Activated CD4-positive, alpha-beta T cell treated with anti-CD3 and anti-CD28 coated beads for 36 hours (primary cell): ENCODE measurements at regions of chr14 and their contacts with region 1.

Region 1: GRCh38 chr14:63933711-63934110 is 80.9 kb downstream of the SYNE2 start:
- DNase-seq: no peak
- ATAC-seq: no peak
- H3K4me3 Mint-ChIP-seq: no peak overlapping the region
- H3K27ac Mint-ChIP-seq: no peak overlapping the region
- H3K4me1 Mint-ChIP-seq: peaks cover 15% of the 10 kb centered on the region
- H3K27me3 Mint-ChIP-seq: no peaks in the 10 kb centered on the region

Region 2: GRCh38 chr14:63394841-63395240 is 538.9 kb before region 1 on chr14:
- CTCF ChIA-PET with region 1: no interaction called
- POLR2A ChIA-PET with region 1: no interaction called
- intact Hi-C with region 1: no loop called
- DNase-seq: no peak
- ATAC-seq: no peak
- H3K4me3 Mint-ChIP-seq: no peak overlapping the region
- H3K27ac Mint-ChIP-seq: no peak overlapping the region
- H3K4me1 Mint-ChIP-seq: peaks cover 4% of the 10 kb centered on the region
- H3K27me3 Mint-ChIP-seq: no peaks in the 10 kb centered on the region

Region 3: GRCh38 chr14:63910583-63911363 is 22.9 kb before region 1 on chr14:
- CTCF ChIA-PET with region 1: no interaction called
- POLR2A ChIA-PET with region 1: no interaction called
- intact Hi-C with region 1: loop called in 1 of 2 experiments (anchors 2 kb)
- DNase-seq: peak; percentile 24
- ATAC-seq: peak; percentile 94
- H3K4me3 Mint-ChIP-seq: no peak overlapping the region
- H3K27ac Mint-ChIP-seq: peak overlapping the region; percentile 44
- H3K4me1 Mint-ChIP-seq: peaks cover 47% of the 10 kb centered on the region
- H3K27me3 Mint-ChIP-seq: no peaks in the 10 kb centered on the region

Region 4: GRCh38 chr14:64788668-64789067 is 855.0 kb after region 1 on chr14:
- CTCF ChIA-PET with region 1: no interaction called
- POLR2A ChIA-PET with region 1: no interaction called
- intact Hi-C with region 1: no loop called
- DNase-seq: no peak
- ATAC-seq: peak; percentile 49
- H3K4me3 Mint-ChIP-seq: no peak overlapping the region
- H3K27ac Mint-ChIP-seq: no peak overlapping the region
- H3K4me1 Mint-ChIP-seq: no peaks in the 10 kb centered on the region
- H3K27me3 Mint-ChIP-seq: no peaks in the 10 kb centered on the region